ENCODE measurements at regions of chr17 and their contacts with region 1.

Region 1: DNA sequence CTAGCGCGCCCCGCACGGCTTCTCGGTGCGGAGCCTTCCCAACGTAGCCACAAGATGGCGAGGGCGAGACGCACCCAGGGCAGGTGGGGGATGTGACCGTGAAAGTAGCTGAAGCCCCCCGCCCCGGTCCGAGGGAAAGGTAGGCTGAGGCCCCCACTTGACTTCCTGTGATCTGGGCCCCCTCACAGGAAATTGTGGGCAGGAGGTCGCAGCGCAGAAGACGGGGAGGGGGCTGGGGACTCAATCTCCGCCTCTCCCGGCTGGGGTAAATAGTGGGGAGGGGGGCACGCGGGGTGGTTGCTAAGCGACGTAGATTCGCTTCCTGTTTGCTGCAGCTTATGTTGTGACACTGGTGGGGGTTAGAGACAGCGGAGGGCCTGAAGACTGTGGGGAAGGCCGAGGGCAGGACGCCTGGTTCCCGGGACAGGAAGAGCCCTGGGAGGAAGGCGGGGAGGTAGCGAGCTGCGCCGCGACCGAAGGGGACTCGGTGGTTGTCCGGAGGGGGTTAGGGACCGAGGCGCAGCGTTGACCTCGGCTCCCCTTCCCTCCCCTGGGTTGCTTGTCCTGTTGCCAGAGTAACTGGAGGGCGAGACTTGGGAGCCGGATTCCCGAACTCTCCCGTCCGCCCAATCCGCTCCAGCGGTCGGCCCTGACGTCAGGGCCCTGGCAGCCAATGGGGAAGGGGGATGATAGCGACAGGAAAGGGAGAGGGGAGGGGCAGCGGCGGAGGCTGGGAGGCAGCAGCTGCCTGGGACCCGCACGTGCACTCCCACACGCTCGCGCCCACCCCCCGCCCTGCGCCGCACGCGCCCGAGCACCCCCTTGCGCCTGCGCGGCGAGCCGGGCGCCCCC is 1.2 kb downstream of the KDM6B start:
- DNase-seq: peak; percentile 99
- ATAC-seq: peak; percentile 63
- H3K4me3 ChIP-seq: peak overlapping the region; percentile 64
- H3K27ac ChIP-seq: peak overlapping the region; percentile 89
- H3K4me1 ChIP-seq: peaks cover 15% of the 10 kb centered on the region
- H3K27me3 ChIP-seq: peaks cover 4% of the 10 kb centered on the region
- CTCF ChIP-seq: peak; percentile 79
- POLR2A ChIP-seq: peak; percentile 79
- RAD21 ChIP-seq: peak; percentile 76

Region 2: GRCh38 chr17:7851438-7852256 is 16.5 kb after region 1 on chr17:
- CTCF ChIA-PET with region 1: interaction called, 10 read pairs
- POLR2A ChIA-PET with region 1: interaction called, 4 read pairs
- dilution Hi-C with region 1: no loop called
- in situ Hi-C with region 1: no loop called
- intact Hi-C with region 1: loop called (anchors 1 kb)
- DNase-seq: peak; percentile 81
- ATAC-seq: peak; percentile 89
- H3K4me3 ChIP-seq: no peak overlapping the region
- H3K27ac ChIP-seq: no peak overlapping the region
- H3K4me1 ChIP-seq: peaks cover 15% of the 10 kb centered on the region
- H3K27me3 ChIP-seq: no peaks in the 10 kb centered on the region
- CTCF ChIP-seq: peak; percentile 95
- POLR2A ChIP-seq: peak; percentile 62
- RAD21 ChIP-seq: peak; percentile 89

Region 3: GRCh38 chr17:7856883-7857723 is 21.9 kb after region 1 on chr17 and contains the start of gene NAA38:
- CTCF ChIA-PET with region 1: interaction called, 10 read pairs
- POLR2A ChIA-PET with region 1: interaction called, 4 read pairs
- dilution Hi-C with region 1: no loop called
- in situ Hi-C with region 1: no loop called
- intact Hi-C with region 1: no loop called
- DNase-seq: peak; percentile 100
- ATAC-seq: peak; percentile 88
- H3K4me3 ChIP-seq: peak within 1 kb of the TSS; percentile 59
- H3K27ac ChIP-seq: peak within 1 kb of the TSS; percentile 94
- H3K4me1 ChIP-seq: peaks cover 20% of the 10 kb centered on the region
- H3K27me3 ChIP-seq: no peaks in the 10 kb centered on the region
- CTCF ChIP-seq: peak; percentile 51
- POLR2A ChIP-seq: peak; percentile 66; the same call in 1 of the 2 replicates
- RAD21 ChIP-seq: peak; percentile 38
- total RNA-seq, gene NAA38: 40.7 and 62.2 TPM in 2 replicates

Region 4: GRCh38 chr17:7974638-7975131 is 139.5 kb after region 1 on chr17:
- CTCF ChIA-PET with region 1: no interaction called
- POLR2A ChIA-PET with region 1: interaction called, 11 read pairs
- dilution Hi-C with region 1: no loop called
- in situ Hi-C with region 1: no loop called
- intact Hi-C with region 1: no loop called
- DNase-seq: no peak
- ATAC-seq: no peak
- H3K4me3 ChIP-seq: no peak overlapping the region
- H3K27ac ChIP-seq: no peak overlapping the region
- H3K4me1 ChIP-seq: no peaks in the 10 kb centered on the region
- H3K27me3 ChIP-seq: peaks cover 15% of the 10 kb centered on the region
- CTCF ChIP-seq: no peak
- POLR2A ChIP-seq: no peak
- RAD21 ChIP-seq: no peak

Measured in IMR-90 (cell line).